B cell (primary cell): ENCODE measurements at regions of chr3 and their contacts with region 1.

Region 1: DNA sequence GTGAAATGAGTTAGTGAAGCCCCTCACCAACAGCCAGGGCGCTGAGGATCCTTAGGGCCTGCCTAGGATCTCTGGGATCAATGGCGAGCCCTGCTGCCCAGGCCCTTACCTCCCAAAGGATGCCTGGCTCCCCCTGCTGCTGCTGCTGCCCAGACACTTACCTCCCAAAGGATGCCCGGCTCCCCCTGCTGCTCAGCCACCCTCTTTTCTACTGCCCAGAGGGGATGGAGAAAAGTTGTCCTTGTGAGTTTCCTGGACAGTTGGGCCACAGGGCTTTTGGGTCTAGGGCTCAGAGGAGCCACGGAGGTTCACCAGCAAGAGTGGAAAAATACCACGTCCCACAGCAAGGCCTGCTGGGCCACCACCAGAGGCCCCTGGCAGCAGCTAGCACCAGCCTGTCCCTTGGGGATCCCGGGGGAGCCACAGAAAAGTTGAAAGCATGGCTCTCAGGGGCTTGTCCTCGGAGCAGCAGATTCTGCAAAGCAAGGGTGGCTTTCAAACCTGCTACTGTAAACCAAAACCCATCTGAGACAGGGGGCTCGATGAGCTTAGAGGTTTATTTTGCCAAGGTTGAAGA is 59.4 kb downstream of the SLC6A6 start:
- DNase-seq: peak; percentile 62
- ATAC-seq: peak; percentile 71
- H3K4me3 ChIP-seq: no peak overlapping the region
- H3K4me3 Mint-ChIP-seq: no peak overlapping the region
- H3K27ac ChIP-seq: no peak overlapping the region
- H3K27ac Mint-ChIP-seq: no peak overlapping the region
- H3K4me1 ChIP-seq: no peaks in the 10 kb centered on the region
- H3K4me1 Mint-ChIP-seq: no peaks in the 10 kb centered on the region
- H3K27me3 ChIP-seq: no peaks in the 10 kb centered on the region
- H3K27me3 Mint-ChIP-seq: no peaks in the 10 kb centered on the region
- CTCF ChIP-seq: peak; percentile 49

Region 2: GRCh38 chr3:14203521-14204079 is 258.2 kb before region 1 on chr3:
- CTCF ChIA-PET with region 1: interaction called, 52 read pairs
- POLR2A ChIA-PET with region 1: no interaction called
- intact Hi-C with region 1: no loop called
- DNase-seq: peak; percentile 61
- ATAC-seq: no peak
- H3K4me3 ChIP-seq: no peak overlapping the region
- H3K4me3 Mint-ChIP-seq: no peak overlapping the region
- H3K27ac ChIP-seq: no peak overlapping the region
- H3K27ac Mint-ChIP-seq: no peak overlapping the region
- H3K4me1 ChIP-seq: no peaks in the 10 kb centered on the region
- H3K4me1 Mint-ChIP-seq: peaks cover 2% of the 10 kb centered on the region
- H3K27me3 ChIP-seq: no peaks in the 10 kb centered on the region
- H3K27me3 Mint-ChIP-seq: no peaks in the 10 kb centered on the region
- CTCF ChIP-seq: peak; percentile 87

Region 3: GRCh38 chr3:14402304-14402811 is 59.5 kb before region 1 on chr3 and contains the start of gene SLC6A6:
- CTCF ChIA-PET with region 1: interaction called, 40 read pairs
- POLR2A ChIA-PET with region 1: interaction called, 3 read pairs
- intact Hi-C with region 1: loop called (anchors 1 kb)
- DNase-seq: peak; percentile 97
- ATAC-seq: peak; percentile 80
- H3K4me3 ChIP-seq: peak within 1 kb of the TSS; percentile 53 to 87 (median 85)
- H3K4me3 Mint-ChIP-seq: peak within 1 kb of the TSS; percentile 99
- H3K27ac ChIP-seq: peak within 1 kb of the TSS; percentile 81 to 89
- H3K27ac Mint-ChIP-seq: peak within 1 kb of the TSS; percentile 98
- H3K4me1 ChIP-seq: peaks cover 39 to 55% of the 10 kb centered on the region in 2 donors
- H3K4me1 Mint-ChIP-seq: peaks cover 60% of the 10 kb centered on the region
- H3K27me3 ChIP-seq: no peaks in the 10 kb centered on the region
- H3K27me3 Mint-ChIP-seq: no peaks in the 10 kb centered on the region
- CTCF ChIP-seq: peak; percentile 67
- total RNA-seq, gene SLC6A6: 48.7 and 50.1 TPM in 2 replicates

Region 4: GRCh38 chr3:14426063-14426620 is 35.7 kb before region 1 on chr3:
- CTCF ChIA-PET with region 1: interaction called, 20 read pairs
- POLR2A ChIA-PET with region 1: no interaction called
- intact Hi-C with region 1: no loop called
- DNase-seq: peak; percentile 74
- ATAC-seq: peak; percentile 56
- H3K4me3 ChIP-seq: peak overlapping the region in 1 of 5 experiments; percentile 23
- H3K4me3 Mint-ChIP-seq: peak overlapping the region; percentile 67
- H3K27ac ChIP-seq: peak overlapping the region; percentile 64 to 98
- H3K27ac Mint-ChIP-seq: peak overlapping the region; percentile 94
- H3K4me1 ChIP-seq: peaks cover 78 to 81% of the 10 kb centered on the region in 2 donors
- H3K4me1 Mint-ChIP-seq: peaks cover 87% of the 10 kb centered on the region
- H3K27me3 ChIP-seq: no peaks in the 10 kb centered on the region
- H3K27me3 Mint-ChIP-seq: no peaks in the 10 kb centered on the region
- CTCF ChIP-seq: no peak

Region 5: DNA sequence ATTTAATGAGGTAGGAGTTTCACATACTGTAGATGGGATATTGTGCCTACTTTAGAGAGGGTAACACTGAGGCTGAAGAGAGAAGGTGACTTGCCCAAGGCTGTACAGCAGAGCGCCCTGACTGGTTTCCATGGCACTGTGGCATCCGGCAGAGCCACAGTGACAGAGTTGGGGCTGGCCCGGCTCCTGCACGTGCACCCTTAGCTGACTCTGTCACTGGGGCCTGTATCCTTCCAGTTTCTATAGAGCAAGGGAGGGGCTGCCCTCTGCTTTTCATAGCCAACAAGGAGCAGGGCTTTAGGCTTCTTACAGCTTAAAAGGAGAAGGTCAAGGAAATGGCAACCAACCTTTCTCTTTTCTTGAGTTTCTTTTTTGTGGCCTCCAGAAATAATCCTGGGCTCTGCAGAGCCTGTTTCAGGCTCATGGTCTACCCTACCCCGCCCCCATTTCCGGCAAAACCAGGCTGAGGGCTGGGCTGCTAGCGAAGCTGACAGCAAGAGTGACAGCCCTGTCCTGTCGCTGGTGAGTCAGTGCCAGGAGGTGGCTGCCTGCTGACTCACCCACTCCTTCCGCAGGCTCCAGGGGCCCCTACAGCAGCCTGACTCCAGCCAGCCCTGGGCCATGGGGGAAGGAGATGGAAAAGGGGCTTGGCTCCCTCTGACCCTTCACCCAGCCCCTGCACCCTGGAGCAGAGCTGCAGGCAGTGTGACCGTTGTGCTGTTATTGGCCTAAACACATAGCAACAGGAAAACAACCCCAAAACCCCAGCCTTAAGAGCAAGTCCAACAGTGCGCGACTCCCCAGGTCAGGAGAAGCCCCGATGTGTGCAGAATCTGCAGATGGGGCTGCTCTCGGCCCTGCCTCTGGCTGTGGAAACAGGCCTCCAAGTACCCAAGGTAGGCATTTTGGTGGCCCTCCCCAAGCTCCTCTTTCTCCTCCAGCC is 29.7 kb before region 1 on chr3:
- CTCF ChIA-PET with region 1: interaction called, 20 read pairs
- POLR2A ChIA-PET with region 1: no interaction called
- intact Hi-C with region 1: no loop called
- DNase-seq: peak; percentile 94
- ATAC-seq: peak; percentile 78
- H3K4me3 ChIP-seq: peak overlapping the region in 4 of 5 experiments; percentile 5 to 59 (median 34)
- H3K4me3 Mint-ChIP-seq: peak overlapping the region; percentile 80
- H3K27ac ChIP-seq: peak overlapping the region; percentile 93 to 98
- H3K27ac Mint-ChIP-seq: peak overlapping the region; percentile 94
- H3K4me1 ChIP-seq: peaks cover 75 to 89% of the 10 kb centered on the region in 2 donors
- H3K4me1 Mint-ChIP-seq: peaks cover 88% of the 10 kb centered on the region
- H3K27me3 ChIP-seq: no peaks in the 10 kb centered on the region
- H3K27me3 Mint-ChIP-seq: no peaks in the 10 kb centered on the region
- CTCF ChIP-seq: no peak

Region 6: GRCh38 chr3:14439579-14440518 is 22.0 kb before region 1 on chr3:
- CTCF ChIA-PET with region 1: interaction called, 11 read pairs
- POLR2A ChIA-PET with region 1: no interaction called
- intact Hi-C with region 1: no loop called
- DNase-seq: no peak
- ATAC-seq: peak; percentile 58
- H3K4me3 ChIP-seq: no peak overlapping the region
- H3K4me3 Mint-ChIP-seq: peak overlapping the region; percentile 62
- H3K27ac ChIP-seq: no peak overlapping the region
- H3K27ac Mint-ChIP-seq: peak overlapping the region; percentile 63
- H3K4me1 ChIP-seq: peaks cover 17 to 37% of the 10 kb centered on the region in 2 donors
- H3K4me1 Mint-ChIP-seq: peaks cover 41% of the 10 kb centered on the region
- H3K27me3 ChIP-seq: no peaks in the 10 kb centered on the region
- H3K27me3 Mint-ChIP-seq: no peaks in the 10 kb centered on the region
- CTCF ChIP-seq: no peak